ENCODE measurements at regions of chr11 and their contacts with region 1.

Region 1: DNA sequence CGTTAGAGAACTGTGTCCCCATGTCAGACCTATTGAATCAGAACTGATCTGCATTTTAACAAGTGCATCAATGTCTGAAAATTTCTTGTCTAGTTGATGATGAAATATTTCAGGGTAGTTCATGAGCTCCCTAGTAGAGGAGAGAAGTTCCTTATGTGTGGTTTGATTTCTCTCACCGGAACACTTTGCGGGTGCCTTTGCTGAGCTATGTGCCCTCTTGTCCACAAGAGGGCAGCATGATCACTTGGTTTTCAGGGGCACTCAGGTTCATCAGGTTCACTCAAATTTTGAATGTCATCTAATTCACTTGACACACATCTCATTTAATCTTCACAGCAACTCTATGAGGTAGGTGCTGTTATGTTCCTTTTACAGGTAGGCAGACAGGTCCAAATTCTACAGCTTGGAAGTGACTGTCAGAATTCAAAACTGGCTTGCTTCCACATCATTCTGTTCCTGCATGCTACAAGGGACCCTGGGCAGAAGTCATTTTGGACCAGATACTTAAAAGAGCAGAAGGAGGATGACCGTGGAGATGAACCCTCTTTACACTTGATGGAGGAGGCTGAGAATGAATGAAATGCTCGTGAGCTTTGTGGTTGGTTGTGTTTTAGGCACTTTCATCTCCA is 55.6 kb downstream of the P4HA3 start:
- ATAC-seq: peak; percentile 40 to 75 (median 67)
- H3K4me3 ChIP-seq: no peak overlapping the region
- H3K27ac ChIP-seq: no peak overlapping the region
- H3K4me1 ChIP-seq: no peaks in the 10 kb centered on the region

Region 2: GRCh38 chr11:73507086-73507485 is 748.8 kb before region 1 on chr11:
- in situ Hi-C with region 1: no loop called
- ATAC-seq: no peak
- H3K4me3 ChIP-seq: no peak overlapping the region
- H3K27ac ChIP-seq: no peak overlapping the region
- H3K4me1 ChIP-seq: peaks cover 0 to 4% of the 10 kb centered on the region in 2 donors

Region 3: GRCh38 chr11:74037309-74037708 is 218.5 kb before region 1 on chr11:
- in situ Hi-C with region 1: no loop called
- ATAC-seq: no peak
- H3K4me3 ChIP-seq: no peak overlapping the region
- H3K27ac ChIP-seq: no peak overlapping the region
- H3K4me1 ChIP-seq: no peaks in the 10 kb centered on the region

Region 4: DNA sequence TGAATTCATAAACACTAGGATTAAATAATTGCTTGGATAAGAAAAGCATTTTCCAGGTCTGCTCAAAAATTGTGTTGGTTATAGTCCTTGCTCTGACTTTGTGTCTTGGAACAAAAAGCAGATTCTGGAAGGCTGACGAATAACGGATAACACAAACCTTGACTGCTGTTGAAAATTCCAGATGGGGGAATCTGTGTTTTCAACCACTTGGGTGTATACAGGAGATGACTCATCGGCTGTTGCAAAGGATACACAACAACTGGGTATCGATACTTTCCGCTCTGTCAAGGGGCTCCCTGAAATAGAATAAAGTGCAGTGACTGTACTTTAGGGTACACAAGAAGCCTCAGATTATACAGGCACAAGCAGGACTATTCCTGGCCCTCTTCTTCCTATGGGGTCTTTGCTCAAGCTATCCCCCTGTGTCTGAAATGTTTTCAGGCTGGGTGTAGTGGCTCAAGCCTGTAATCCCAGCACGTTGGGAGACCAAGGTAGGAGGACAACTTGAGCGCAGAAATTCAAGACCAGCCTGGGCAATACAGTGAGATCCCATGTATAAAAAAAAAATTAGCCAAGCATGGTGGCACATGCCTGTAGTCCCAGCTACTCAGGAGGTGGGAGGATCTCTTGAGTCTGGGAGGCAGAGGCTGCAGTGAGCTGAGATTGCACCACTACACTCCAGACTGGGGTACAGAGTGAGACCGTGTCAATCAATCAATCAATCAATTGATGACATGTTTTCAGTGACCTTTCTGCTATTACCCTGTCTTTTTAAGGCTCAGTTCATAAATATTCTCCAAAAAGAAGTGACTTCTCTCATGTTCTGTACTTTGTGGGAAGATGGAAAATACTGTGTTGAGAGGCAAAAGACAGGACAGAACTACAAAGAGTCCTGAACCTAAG is 198.4 kb before region 1 on chr11:
- in situ Hi-C with region 1: no loop called
- ATAC-seq: peak in 2 of 8 experiments; percentile 23 to 59
- H3K4me3 ChIP-seq: no peak overlapping the region
- H3K27ac ChIP-seq: no peak overlapping the region
- H3K4me1 ChIP-seq: no peaks in the 10 kb centered on the region

Region 5: DNA sequence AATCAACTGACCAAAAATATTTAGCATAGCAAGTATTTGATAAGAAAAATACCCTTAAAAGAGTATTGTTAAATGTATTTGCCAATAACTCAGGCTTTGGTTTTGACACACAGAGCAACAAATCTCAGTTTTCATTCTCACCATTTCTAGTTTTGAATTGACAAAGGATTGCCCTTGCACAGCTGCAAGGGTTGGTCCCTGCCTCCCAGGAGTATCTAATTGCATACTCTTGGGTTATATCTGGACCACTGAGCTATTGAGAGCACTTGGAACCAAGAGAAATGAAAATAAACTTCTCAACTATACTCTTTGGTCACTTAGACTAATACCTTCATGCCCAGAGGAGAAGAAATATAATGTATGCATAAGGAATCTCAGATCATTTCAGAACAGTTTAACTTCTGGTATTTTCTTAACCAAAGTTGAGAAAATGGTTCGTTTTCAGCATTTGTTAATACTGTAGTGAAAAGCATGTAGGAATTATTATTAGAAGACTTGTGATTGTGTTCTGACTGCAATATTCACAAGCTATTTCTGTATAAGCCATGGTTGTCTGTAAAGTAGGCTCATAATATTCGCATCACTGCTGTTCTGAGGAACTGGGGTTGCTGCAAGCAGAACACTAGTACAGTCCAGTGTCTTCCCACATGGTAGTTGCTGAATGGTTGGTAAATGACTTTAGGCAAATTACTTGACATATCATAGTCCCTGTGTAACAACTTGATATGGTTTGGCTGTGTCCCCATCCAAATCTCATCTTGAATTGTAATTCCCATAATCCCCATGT is 93.0 kb before region 1 on chr11:
- in situ Hi-C with region 1: no loop called
- ATAC-seq: peak in 3 of 8 experiments; percentile 29 to 31 (median 30)
- H3K4me3 ChIP-seq: no peak overlapping the region
- H3K27ac ChIP-seq: no peak overlapping the region
- H3K4me1 ChIP-seq: no peaks in the 10 kb centered on the region

Region 6: DNA sequence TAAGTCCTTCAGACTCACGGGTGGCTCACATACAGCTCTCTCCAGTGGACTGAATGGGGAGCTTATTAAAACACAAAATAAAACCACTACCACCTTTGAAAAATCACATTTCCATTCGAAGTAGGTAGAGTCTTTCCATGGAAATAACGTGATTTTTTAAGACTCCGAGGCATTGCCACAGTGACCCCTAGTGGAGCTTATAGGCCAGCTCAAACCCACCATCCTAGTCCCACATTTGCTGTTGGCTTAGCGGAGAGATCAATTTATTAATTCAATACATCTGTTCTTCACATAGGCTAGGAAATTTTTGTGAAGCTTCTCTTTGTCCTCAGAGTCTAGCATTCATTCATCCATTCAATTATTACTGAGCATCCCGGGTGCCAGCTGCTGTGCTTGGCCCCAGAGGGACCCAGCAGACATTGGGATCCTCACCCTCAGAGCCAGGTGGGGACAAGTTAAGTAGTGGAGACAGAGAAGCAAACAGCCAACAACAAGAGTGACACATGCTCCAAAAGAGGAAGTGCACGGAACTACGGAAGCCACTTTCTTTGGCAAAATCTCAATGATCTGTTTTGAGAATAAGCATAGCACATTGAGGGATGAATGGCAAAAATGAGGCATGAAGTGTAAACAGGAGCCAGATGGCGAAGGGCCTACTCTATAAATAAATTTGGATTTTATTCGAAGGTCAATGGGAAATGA is 65.8 kb after region 1 on chr11:
- in situ Hi-C with region 1: loop called in 1 of 9 experiments (anchors 5 kb)
- ATAC-seq: peak in 1 of 8 experiments; percentile 21
- H3K4me3 ChIP-seq: no peak overlapping the region
- H3K27ac ChIP-seq: no peak overlapping the region
- H3K4me1 ChIP-seq: no peaks in the 10 kb centered on the region

Region 7: GRCh38 chr11:74449369-74449931 is 193.6 kb after region 1 on chr11:
- in situ Hi-C with region 1: loop called in 5 of 9 experiments (anchors 10 to 25 kb)
- ATAC-seq: peak; percentile 72 to 96 (median 82)
- H3K4me3 ChIP-seq: no peak overlapping the region
- H3K27ac ChIP-seq: no peak overlapping the region
- H3K4me1 ChIP-seq: no peaks in the 10 kb centered on the region

Region 8: GRCh38 chr11:74570266-74571061 is 314.6 kb after region 1 on chr11:
- in situ Hi-C with region 1: loop called in 2 of 9 experiments (anchors 25 kb)
- ATAC-seq: peak in 4 of 8 experiments; percentile 66 to 87 (median 78)
- H3K4me3 ChIP-seq: no peak overlapping the region
- H3K27ac ChIP-seq: no peak overlapping the region
- H3K4me1 ChIP-seq: no peaks in the 10 kb centered on the region

Region 9: DNA sequence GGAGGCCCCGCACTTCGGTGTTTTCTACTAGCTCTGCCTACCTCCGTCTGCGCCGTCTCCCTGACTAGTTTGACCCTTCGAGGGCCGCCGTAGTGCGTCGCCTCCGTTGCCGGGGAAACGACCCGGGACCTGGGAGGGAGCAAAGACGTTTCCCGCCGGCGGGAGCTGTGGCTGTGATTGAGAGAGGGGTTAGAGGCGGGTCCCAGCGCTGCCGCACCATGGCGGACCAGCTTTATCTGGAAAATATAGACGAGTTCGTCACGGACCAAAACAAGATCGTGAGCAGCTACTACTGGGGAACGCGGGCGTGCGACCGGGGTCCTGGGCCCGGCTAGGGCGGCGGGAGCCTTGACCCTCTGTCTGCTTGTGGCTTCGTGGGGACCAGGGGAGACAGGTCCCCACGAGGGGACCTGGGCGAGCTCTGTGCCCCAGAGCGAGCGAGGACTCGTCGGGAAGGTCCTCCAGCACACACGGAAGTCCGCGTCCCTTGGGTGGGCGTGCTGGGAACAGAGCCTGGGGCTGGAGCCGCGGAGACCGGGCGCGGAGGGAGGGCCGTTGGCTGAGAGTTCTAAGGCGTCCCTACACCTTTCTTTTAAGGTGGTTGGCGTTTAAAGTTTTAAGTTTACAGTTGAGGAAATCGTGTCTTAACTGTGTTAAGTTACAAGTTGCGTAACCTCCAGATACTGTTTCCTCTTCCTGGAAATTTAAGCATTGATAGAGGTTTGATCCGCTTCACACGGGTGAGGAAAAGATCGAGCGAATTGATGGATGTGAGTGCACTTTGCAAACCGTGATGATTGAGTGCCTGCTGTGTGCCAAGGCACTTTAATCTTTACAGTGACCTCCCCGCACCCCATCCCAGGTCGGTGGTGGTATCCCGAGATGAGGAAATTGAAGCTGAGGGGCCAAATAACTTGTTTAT is 336.8 kb after region 1 on chr11 and contains the start of gene POLD3:
- in situ Hi-C with region 1: loop called in 1 of 9 experiments (anchors 25 kb)
- ATAC-seq: peak; percentile 95 to 99 (median 99)
- H3K4me3 ChIP-seq: peak within 1 kb of the TSS; percentile 64 to 88 (median 76)
- H3K27ac ChIP-seq: peak within 1 kb of the TSS; percentile 37 to 77
- H3K4me1 ChIP-seq: peaks cover 6 to 8% of the 10 kb centered on the region in 2 donors
- total RNA-seq, gene POLD3: 8.6 to 26.5 (median 15.5) TPM

Measured in motor neuron (in vitro differentiated cells).